BJ (cell line): ENCODE measurements at regions of chr2 and their contacts with region 1.

Region 1: GRCh38 chr2:73290049-73290839 is 3.1 kb downstream of the EGR4 start:
- DNase-seq: no peak
- H3K4me3 ChIP-seq: no peak overlapping the region
- H3K27me3 ChIP-seq: peaks cover 53% of the 10 kb centered on the region
- CTCF ChIP-seq: peak; percentile 77

Region 2: DNA sequence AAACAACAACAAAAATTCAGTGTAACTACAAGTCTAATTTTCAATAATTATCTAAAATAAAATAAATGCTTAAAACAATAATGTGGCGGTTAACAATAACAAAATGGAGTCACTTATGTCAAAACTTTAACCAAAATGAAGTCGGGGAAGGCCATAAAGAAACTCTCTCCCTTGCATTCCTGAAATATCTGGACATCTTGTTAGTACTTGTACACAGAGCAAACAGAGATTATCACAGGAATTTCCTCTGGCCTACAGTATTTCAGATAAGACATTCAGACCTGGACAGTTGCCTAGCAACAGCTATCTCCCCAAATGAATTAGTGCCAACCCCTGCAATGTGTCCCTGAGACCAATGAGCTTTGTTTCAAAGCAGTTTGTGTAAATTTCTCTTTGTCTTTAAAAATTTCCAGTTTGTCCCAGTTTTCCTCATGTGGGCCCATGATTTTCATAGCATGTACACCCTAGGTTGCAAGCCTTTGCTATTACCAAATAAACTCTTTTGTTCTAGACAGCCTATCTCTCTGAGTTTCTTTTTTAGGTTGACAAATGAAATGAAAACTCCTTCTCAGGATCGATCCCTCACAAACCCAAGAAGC is 533.0 kb before region 1 on chr2:
- CTCF ChIA-PET with region 1: no interaction called
- POLR2A ChIA-PET with region 1: no interaction called
- DNase-seq: no peak
- H3K4me3 ChIP-seq: no peak overlapping the region
- H3K27me3 ChIP-seq: no peaks in the 10 kb centered on the region
- CTCF ChIP-seq: no peak

Region 3: DNA sequence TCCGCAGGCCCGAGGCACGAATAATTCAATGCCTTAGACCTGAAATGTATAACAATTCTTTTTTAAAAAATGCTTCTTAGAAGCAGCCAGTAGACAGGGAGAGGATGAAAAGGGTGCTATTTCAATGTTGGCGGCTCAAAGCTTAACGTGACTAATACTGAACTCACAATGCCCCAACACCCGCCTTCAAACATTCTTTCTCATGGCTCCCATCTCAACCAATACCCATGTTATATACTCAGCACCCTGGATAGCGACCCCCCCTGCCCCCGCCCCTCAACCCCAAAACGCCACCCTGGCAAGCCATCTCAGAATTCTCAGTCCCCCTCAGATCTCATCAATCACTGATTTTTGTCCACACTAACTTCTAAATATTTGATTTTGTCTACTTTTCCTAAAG is 10.4 kb before region 1 on chr2:
- CTCF ChIA-PET with region 1: interaction called, 14 read pairs
- POLR2A ChIA-PET with region 1: no interaction called
- DNase-seq: no peak
- H3K4me3 ChIP-seq: no peak overlapping the region
- H3K27me3 ChIP-seq: peaks cover 1% of the 10 kb centered on the region
- CTCF ChIP-seq: no peak